CD8-positive, alpha-beta T cell (primary cell): ENCODE measurements at regions of chr1 and their contacts with region 1.

Region 1: GRCh38 chr1:86704458-86704971 is at the start of gene SH3GLB1:
- DNase-seq: peak; percentile 80 to 94 (median 90)
- ATAC-seq: peak; percentile 87
- H3K4me3 ChIP-seq: peak within 1 kb of the TSS; percentile 82 to 83
- H3K4me3 Mint-ChIP-seq: peak within 1 kb of the TSS; percentile 97
- H3K27ac ChIP-seq: peak within 1 kb of the TSS; percentile 81 to 92
- H3K27ac Mint-ChIP-seq: peak within 1 kb of the TSS; percentile 99
- H3K4me1 ChIP-seq: peaks cover 38% of the 10 kb centered on the region
- H3K4me1 Mint-ChIP-seq: peaks cover 57% of the 10 kb centered on the region
- H3K27me3 ChIP-seq: no peaks in the 10 kb centered on the region
- H3K27me3 Mint-ChIP-seq: no peaks in the 10 kb centered on the region
- CTCF ChIP-seq: peak; percentile 98
- total RNA-seq, gene SH3GLB1: 47.5 to 56.5 TPM

Region 2: DNA sequence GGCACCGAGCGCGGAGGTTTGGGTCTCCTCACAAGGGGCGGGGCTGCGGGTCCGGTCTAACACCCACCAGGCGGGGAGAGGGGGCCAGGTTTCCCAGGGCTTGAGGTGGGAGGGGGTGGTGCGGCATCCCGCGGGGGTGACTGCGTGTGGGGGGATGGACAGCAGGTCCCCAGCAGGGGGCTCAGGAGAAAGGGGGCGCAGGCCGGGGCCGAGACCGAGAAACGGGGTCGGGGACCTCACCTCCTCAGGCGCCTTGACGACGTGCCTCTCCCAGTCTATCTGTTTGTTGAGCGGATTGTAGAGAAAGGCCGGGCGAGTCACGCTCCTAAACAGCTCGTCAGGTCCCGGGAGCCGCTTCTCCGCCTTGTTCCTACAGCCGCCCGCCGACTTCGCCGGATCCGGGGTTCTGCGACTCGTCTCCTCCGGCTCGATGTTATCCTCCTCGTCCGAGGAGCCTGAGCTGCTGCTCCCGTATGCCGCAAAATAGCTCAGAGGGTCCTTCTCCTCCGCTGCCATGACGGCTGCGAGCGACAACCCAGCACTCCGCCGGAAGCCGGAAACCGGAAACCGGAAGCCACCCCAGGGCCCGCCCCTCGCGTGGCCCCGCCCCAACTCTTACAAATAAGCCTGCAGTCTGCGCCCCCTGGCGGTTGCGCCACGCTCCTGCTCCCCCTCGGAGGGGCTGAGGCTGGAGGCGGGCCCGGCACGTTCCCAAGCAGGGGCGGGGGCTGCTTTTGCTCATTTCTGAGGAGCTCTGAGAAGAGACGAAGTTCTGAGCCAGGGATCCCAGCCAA is 1445.2 kb before region 1 on chr1 and contains the start of gene C1orf52:
- CTCF ChIA-PET with region 1: no interaction called
- POLR2A ChIA-PET with region 1: no interaction called
- intact Hi-C with region 1: loop called in 1 of 2 experiments (anchors 10 kb)
- DNase-seq: peak; percentile 86 to 99 (median 98)
- ATAC-seq: peak; percentile 96
- H3K4me3 ChIP-seq: peak within 1 kb of the TSS; percentile 65 to 93
- H3K4me3 Mint-ChIP-seq: peak within 1 kb of the TSS; percentile 97
- H3K27ac ChIP-seq: peak within 1 kb of the TSS; percentile 78 to 88
- H3K27ac Mint-ChIP-seq: peak within 1 kb of the TSS; percentile 95
- H3K4me1 ChIP-seq: peaks cover 24% of the 10 kb centered on the region
- H3K4me1 Mint-ChIP-seq: peaks cover 36% of the 10 kb centered on the region
- H3K27me3 ChIP-seq: no peaks in the 10 kb centered on the region
- H3K27me3 Mint-ChIP-seq: no peaks in the 10 kb centered on the region
- CTCF ChIP-seq: peak; percentile 99
- total RNA-seq, gene C1orf52: 70.7 to 74.4 TPM

Region 3: GRCh38 chr1:86470859-86471258 is 233.7 kb before region 1 on chr1:
- CTCF ChIA-PET with region 1: no interaction called
- POLR2A ChIA-PET with region 1: no interaction called
- intact Hi-C with region 1: loop called in 1 of 2 experiments (anchors 10 kb)
- DNase-seq: no peak
- ATAC-seq: no peak
- H3K4me3 ChIP-seq: no peak overlapping the region
- H3K4me3 Mint-ChIP-seq: no peak overlapping the region
- H3K27ac ChIP-seq: no peak overlapping the region
- H3K27ac Mint-ChIP-seq: no peak overlapping the region
- H3K4me1 ChIP-seq: no peaks in the 10 kb centered on the region
- H3K4me1 Mint-ChIP-seq: no peaks in the 10 kb centered on the region
- H3K27me3 ChIP-seq: peaks cover 0 to 3% of the 10 kb centered on the region in 2 experiments
- H3K27me3 Mint-ChIP-seq: peaks cover 13% of the 10 kb centered on the region
- CTCF ChIP-seq: no peak

Region 4: GRCh38 chr1:86741947-86742572 is 37.5 kb after region 1 on chr1:
- CTCF ChIA-PET with region 1: interaction called, 29 read pairs
- POLR2A ChIA-PET with region 1: interaction called, 11 read pairs
- intact Hi-C with region 1: loop called (anchors 2 kb)
- DNase-seq: peak in 6 of 9 experiments; percentile 11 to 71 (median 48)
- ATAC-seq: no peak
- H3K4me3 ChIP-seq: no peak overlapping the region
- H3K4me3 Mint-ChIP-seq: no peak overlapping the region
- H3K27ac ChIP-seq: no peak overlapping the region
- H3K27ac Mint-ChIP-seq: no peak overlapping the region
- H3K4me1 ChIP-seq: peaks cover 20% of the 10 kb centered on the region
- H3K4me1 Mint-ChIP-seq: peaks cover 4% of the 10 kb centered on the region
- H3K27me3 ChIP-seq: no peaks in the 10 kb centered on the region
- H3K27me3 Mint-ChIP-seq: no peaks in the 10 kb centered on the region
- CTCF ChIP-seq: peak; percentile 83

Region 5: DNA sequence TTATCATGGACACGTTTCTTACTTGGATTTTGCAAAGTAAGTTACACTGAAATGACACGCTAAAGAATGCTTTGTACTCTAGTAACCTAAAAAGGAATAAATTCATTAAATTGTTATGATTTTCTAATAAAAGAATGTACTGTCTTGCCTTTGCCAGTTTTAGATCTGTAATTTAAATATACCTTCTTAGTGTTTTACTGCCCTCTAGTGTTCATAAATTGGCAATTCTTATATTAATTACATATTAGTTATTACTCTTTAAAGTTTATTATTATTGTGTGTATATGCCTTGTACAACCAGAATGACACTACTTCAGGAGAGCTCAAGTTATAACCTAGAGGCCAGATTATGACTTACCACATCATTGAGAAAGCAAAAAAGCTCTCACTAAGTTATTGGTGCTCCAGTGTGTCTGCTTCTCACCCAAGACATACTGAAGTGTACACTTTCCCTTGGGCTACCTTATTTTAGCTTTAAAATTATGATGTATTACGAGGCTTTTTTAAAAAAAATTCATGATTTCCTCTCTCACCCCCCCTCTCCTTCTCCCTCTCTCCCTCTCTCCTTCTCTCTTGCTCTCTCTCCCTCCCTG is 379.8 kb after region 1 on chr1:
- CTCF ChIA-PET with region 1: interaction called, 3 read pairs
- POLR2A ChIA-PET with region 1: no interaction called
- intact Hi-C with region 1: loop called (anchors 10 kb)
- DNase-seq: peak in 2 of 9 experiments; percentile 33 to 53
- ATAC-seq: peak; percentile 46
- H3K4me3 ChIP-seq: no peak overlapping the region
- H3K4me3 Mint-ChIP-seq: no peak overlapping the region
- H3K27ac ChIP-seq: no peak overlapping the region
- H3K27ac Mint-ChIP-seq: no peak overlapping the region
- H3K4me1 ChIP-seq: no peaks in the 10 kb centered on the region
- H3K4me1 Mint-ChIP-seq: peaks cover 4% of the 10 kb centered on the region
- H3K27me3 ChIP-seq: no peaks in the 10 kb centered on the region
- H3K27me3 Mint-ChIP-seq: no peaks in the 10 kb centered on the region
- CTCF ChIP-seq: peak; percentile 79

Region 6: GRCh38 chr1:87560601-87561360 is 856.3 kb after region 1 on chr1:
- CTCF ChIA-PET with region 1: no interaction called
- POLR2A ChIA-PET with region 1: no interaction called
- intact Hi-C with region 1: no loop called
- DNase-seq: no peak
- ATAC-seq: no peak
- H3K4me3 ChIP-seq: no peak overlapping the region
- H3K4me3 Mint-ChIP-seq: no peak overlapping the region
- H3K27ac ChIP-seq: no peak overlapping the region
- H3K27ac Mint-ChIP-seq: no peak overlapping the region
- H3K4me1 ChIP-seq: no peaks in the 10 kb centered on the region
- H3K4me1 Mint-ChIP-seq: no peaks in the 10 kb centered on the region
- H3K27me3 ChIP-seq: no peaks in the 10 kb centered on the region
- H3K27me3 Mint-ChIP-seq: no peaks in the 10 kb centered on the region
- CTCF ChIP-seq: no peak

Region 7: DNA sequence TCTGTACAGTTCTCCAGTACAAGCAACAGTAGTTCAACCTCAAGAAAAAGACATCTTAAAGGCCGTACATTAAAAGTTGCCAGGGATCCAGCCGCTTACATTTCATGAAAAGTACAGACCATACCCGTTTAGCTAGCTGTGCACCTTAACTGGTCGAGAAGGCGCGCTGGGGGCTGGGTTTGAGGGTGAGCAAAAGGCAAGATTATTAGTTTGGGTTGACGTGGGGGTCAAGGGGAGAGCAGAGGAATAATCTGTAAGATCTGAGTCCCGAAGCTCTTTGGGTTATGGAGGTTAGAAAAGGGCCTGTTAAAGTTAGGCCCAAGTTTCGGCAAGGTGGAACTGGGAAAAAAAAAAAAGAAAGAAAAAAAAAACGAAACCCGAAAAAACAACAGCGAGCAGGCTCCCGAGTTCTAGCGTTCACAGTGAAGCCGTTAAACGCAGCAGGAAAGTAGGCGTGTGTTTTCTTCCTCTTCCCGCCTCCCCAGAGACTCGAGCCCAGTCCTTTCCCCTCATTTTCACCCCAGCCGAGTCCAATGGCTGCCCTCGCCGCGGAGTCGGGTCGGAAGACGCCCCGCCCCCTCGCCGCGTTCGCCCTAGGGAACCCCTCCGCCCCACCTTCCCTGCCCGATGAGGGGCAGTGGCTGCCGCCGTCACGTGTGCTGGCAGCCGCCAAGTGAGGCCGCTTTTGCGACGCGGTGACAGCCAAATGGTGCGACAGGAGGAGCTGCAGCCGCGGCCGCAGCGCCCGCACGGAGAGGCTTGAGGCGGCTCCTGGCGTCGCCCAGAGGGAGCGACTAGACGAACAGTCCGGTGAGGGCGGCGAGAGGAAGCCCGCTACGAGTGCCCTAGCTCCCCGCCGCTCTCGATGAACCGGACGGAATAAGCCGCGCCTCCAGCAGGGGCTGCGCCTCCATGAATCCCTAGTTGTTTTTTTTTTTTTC is 1979.3 kb after region 1 on chr1 and contains the start of gene PKN2:
- CTCF ChIA-PET with region 1: no interaction called
- POLR2A ChIA-PET with region 1: no interaction called
- intact Hi-C with region 1: loop called (anchors 10 kb)
- DNase-seq: peak; percentile 92 to 100 (median 98)
- ATAC-seq: peak; percentile 93
- H3K4me3 ChIP-seq: peak within 1 kb of the TSS; percentile 51 to 85
- H3K4me3 Mint-ChIP-seq: peak within 1 kb of the TSS; percentile 91
- H3K27ac ChIP-seq: peak within 1 kb of the TSS; percentile 94
- H3K27ac Mint-ChIP-seq: peak within 1 kb of the TSS; percentile 96
- H3K4me1 ChIP-seq: peaks cover 32% of the 10 kb centered on the region
- H3K4me1 Mint-ChIP-seq: peaks cover 34% of the 10 kb centered on the region
- H3K27me3 ChIP-seq: no peaks in the 10 kb centered on the region
- H3K27me3 Mint-ChIP-seq: no peaks in the 10 kb centered on the region
- CTCF ChIP-seq: peak; percentile 16
- total RNA-seq, gene PKN2: 42.3 to 43.7 TPM